ENCODE measurements at regions of chr6 and their contacts with region 1.

Region 1: GRCh38 chr6:141552473-141552878 is 580.2 kb upstream of the GJE1 start:
- DNase-seq: peak in 1 of 2 donors; percentile 14
- ATAC-seq: peak in 6 of 8 donors; percentile 52 to 94 (median 68)
- H3K4me3 ChIP-seq: no peak overlapping the region
- H3K27ac ChIP-seq: peak overlapping the region in 9 of 10 donors; percentile 7 to 74 (median 43)
- H3K4me1 ChIP-seq: peaks cover 0 to 20% (median 6%) of the 10 kb centered on the region in 9 donors
- H3K27me3 ChIP-seq: no peaks in the 10 kb centered on the region
- CTCF ChIP-seq: no peak

Region 2: GRCh38 chr6:141252828-141253608 is 299.5 kb before region 1 on chr6:
- intact Hi-C with region 1: loop called in 1 of 10 experiments (anchors 10 kb)
- DNase-seq: no peak
- ATAC-seq: peak in 4 of 8 donors; percentile 38 to 70 (median 42)
- H3K4me3 ChIP-seq: peak overlapping the region in 5 of 10 donors; percentile 3 to 25 (median 23)
- H3K27ac ChIP-seq: peak overlapping the region in 7 of 10 donors; percentile 48 to 73 (median 59)
- H3K4me1 ChIP-seq: peaks cover 0 to 24% (median 9%) of the 10 kb centered on the region in 9 donors
- H3K27me3 ChIP-seq: no peaks in the 10 kb centered on the region
- CTCF ChIP-seq: no peak

Region 3: DNA sequence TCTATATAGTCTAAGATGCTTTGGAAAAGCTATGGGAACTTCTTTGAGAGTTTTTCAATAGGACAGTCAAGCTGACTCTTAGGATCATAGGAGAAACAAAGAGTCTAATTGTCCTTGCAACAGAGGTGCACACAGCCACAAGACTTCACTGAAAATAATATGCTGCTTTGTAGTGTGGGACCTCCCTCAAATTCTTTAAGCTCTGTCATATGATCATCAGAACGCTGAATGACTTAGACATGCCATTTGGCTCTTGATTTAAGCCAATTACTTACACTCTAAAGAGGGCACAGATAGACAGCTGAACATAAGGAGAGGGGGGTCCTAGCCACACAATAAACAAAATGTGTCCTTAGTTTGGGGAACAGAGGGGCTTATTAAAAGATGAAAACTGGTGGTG is 238.5 kb before region 1 on chr6:
- intact Hi-C with region 1: loop called in 1 of 10 experiments (anchors 10 kb)
- DNase-seq: no peak
- ATAC-seq: no peak
- H3K4me3 ChIP-seq: no peak overlapping the region
- H3K27ac ChIP-seq: no peak overlapping the region
- H3K4me1 ChIP-seq: peaks cover 0 to 8% (median 0%) of the 10 kb centered on the region in 9 donors
- H3K27me3 ChIP-seq: no peaks in the 10 kb centered on the region
- CTCF ChIP-seq: no peak

Region 4: GRCh38 chr6:141598487-141598886 is 46.0 kb after region 1 on chr6:
- intact Hi-C with region 1: no loop called
- DNase-seq: no peak
- ATAC-seq: peak in 4 of 8 donors; percentile 52 to 83 (median 76)
- H3K4me3 ChIP-seq: no peak overlapping the region
- H3K27ac ChIP-seq: peak overlapping the region in 1 of 10 donors; percentile 10
- H3K4me1 ChIP-seq: peaks cover 0 to 11% (median 4%) of the 10 kb centered on the region in 9 donors
- H3K27me3 ChIP-seq: no peaks in the 10 kb centered on the region
- CTCF ChIP-seq: no peak